CD8-positive, alpha-beta memory T cell (primary cell): ENCODE measurements at regions of chr14 and their contacts with region 1.

Region 1: GRCh38 chr14:89613260-89614008 is 196.4 kb upstream of the FOXN3 start:
- DNase-seq: peak in 1 of 5 donors; percentile 22
- H3K4me3 ChIP-seq: no peak overlapping the region
- H3K4me3 Mint-ChIP-seq: peak overlapping the region; percentile 11 to 70 (median 53)
- H3K27ac ChIP-seq: no peak overlapping the region
- H3K27ac Mint-ChIP-seq: peak overlapping the region; percentile 1 to 89 (median 74)
- H3K4me1 ChIP-seq: peaks cover 58% of the 10 kb centered on the region
- H3K4me1 Mint-ChIP-seq: peaks cover 74 to 90% (median 86%) of the 10 kb centered on the region in 3 donors
- H3K27me3 ChIP-seq: no peaks in the 10 kb centered on the region
- H3K27me3 Mint-ChIP-seq: no peaks in the 10 kb centered on the region

Region 2: DNA sequence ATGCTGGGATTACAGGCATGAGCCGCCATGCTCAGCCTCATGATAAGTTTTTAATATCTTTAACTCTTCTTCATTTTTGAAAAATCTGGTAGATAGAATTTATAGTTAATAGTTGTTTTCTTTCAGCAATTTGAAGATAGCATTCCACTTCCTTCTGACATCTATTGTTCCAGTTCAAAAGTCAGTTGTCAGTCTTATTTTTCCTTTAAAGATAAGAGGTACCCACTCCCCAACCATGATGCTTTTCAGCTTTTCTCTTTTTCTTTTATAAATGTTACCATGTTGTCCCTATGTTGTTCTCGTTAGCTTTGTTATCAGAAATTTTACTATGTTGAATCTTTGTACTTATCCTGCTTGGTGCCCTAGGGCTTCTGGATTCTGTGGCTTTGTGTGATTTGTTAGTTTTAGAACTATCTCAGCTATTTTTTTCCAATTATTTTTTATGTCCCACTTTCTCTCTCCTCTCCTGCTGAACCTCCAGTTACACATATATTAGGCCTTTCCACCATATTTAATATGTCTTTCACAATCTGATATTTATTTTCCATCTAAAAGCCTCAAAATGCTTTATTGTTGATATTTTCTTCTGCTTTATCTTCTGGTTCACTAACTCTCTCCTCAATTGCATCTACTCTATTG is 14.8 kb before region 1 on chr14:
- CTCF ChIA-PET with region 1: interaction called, 3 read pairs
- POLR2A ChIA-PET with region 1: interaction called, 10 read pairs
- DNase-seq: no peak
- H3K4me3 ChIP-seq: no peak overlapping the region
- H3K4me3 Mint-ChIP-seq: peak overlapping the region in 1 of 7 donors; percentile 8
- H3K27ac ChIP-seq: no peak overlapping the region
- H3K27ac Mint-ChIP-seq: peak overlapping the region in 1 of 8 donors; percentile 36
- H3K4me1 ChIP-seq: peaks cover 10% of the 10 kb centered on the region
- H3K4me1 Mint-ChIP-seq: peaks cover 30 to 48% (median 31%) of the 10 kb centered on the region in 3 donors
- H3K27me3 ChIP-seq: no peaks in the 10 kb centered on the region
- H3K27me3 Mint-ChIP-seq: no peaks in the 10 kb centered on the region